Dendritic cell treated with granulocyte-macrophage colony-stimulating factor and Interleukin-4, amounts not matched to agents 40 ng/mL and 50 ng/mL, for 4 days (primary cell): ENCODE measurements at regions of chr7 and their contacts with region 1.

Region 1: DNA sequence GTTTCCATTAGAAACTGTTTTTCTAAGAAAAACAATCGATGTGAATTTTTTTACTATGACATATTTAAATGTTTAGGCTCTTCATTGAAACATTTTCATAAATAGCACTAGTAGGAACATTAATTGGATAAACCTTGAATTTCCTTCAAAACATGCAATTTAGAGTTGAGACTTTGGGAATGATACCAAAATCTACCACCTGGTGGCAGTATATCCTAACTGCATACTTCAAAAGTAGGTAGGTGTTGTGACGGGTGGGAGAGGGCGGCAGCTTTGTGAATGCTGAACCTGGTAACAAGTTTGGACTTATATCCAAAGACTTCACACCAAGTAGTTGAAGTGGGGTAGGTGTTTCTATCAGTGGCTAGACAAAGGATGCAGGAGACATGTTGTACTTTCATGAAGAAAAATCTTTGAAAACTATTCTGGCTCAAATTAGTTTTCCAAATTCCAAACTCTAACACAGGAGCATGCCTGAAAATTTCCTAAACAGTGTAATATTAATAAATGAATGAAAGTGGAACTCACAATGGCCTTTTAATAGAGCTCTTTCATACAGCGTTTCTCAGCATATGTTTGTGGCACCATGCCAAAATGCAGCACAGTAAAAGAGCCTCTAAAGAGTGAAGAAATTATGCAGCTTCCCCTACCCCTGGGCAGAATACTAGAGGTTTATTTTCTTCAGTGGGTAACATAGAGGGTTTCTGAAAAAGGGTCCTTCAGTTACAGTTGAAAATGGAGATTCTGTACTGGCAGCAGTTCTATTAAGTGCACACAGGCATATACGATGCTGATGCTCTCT is 201.0 kb upstream of the TPK1 start:
- H3K4me3 Mint-ChIP-seq: no peak overlapping the region
- H3K27ac Mint-ChIP-seq: no peak overlapping the region
- H3K4me1 Mint-ChIP-seq: peaks cover 5% of the 10 kb centered on the region
- H3K27me3 Mint-ChIP-seq: peaks cover 3% of the 10 kb centered on the region

Region 2: GRCh38 chr7:145106001-145106400 is 69.2 kb after region 1 on chr7:
- intact Hi-C with region 1: no loop called
- H3K4me3 Mint-ChIP-seq: no peak overlapping the region
- H3K27ac Mint-ChIP-seq: no peak overlapping the region
- H3K4me1 Mint-ChIP-seq: no peaks in the 10 kb centered on the region
- H3K27me3 Mint-ChIP-seq: no peaks in the 10 kb centered on the region

Region 3: DNA sequence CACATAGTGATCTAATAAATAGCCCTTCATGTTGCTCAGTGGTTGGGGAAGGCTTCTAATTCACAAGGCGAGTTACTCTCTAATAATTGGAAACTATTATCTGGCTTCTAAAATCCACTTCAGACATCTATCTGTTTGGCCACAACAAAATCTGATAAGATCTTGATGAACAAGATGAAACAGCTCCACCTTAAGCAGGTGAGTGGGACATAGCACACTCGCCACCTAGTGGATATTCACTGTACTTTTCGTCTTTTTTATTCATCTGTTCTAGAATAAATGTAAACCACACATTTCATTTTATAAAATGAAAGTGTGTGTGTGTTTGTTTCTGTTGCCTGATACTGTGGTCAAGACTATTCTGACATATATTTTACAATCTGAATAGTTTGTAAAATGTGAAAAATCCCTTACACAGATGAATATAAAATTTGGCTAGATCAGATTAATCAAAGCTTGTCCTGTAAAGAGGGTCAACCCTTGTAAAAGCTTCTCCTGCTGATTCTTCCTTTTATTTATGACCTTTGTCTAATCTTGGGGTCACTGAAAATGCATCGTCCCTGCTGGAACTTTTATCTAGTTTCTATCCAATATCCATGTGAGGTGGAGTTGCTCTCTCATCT is 1053.3 kb after region 1 on chr7:
- intact Hi-C with region 1: loop called (anchors 5 kb)
- H3K4me3 Mint-ChIP-seq: no peak overlapping the region
- H3K27ac Mint-ChIP-seq: no peak overlapping the region
- H3K4me1 Mint-ChIP-seq: no peaks in the 10 kb centered on the region
- H3K27me3 Mint-ChIP-seq: no peaks in the 10 kb centered on the region